GM18951 (cell line): ENCODE measurements at regions of chr11 and their contacts with region 1.

Region 1: GRCh38 chr11:7986768-7987559 is at the start of gene EIF3F:
- POLR2A ChIP-seq: peak; percentile 63

Region 2: GRCh38 chr11:7892840-7893254 is 94.1 kb before region 1 on chr11:
- in situ Hi-C with region 1: loop called (anchors 10 kb)
- POLR2A ChIP-seq: no peak

Region 3: DNA sequence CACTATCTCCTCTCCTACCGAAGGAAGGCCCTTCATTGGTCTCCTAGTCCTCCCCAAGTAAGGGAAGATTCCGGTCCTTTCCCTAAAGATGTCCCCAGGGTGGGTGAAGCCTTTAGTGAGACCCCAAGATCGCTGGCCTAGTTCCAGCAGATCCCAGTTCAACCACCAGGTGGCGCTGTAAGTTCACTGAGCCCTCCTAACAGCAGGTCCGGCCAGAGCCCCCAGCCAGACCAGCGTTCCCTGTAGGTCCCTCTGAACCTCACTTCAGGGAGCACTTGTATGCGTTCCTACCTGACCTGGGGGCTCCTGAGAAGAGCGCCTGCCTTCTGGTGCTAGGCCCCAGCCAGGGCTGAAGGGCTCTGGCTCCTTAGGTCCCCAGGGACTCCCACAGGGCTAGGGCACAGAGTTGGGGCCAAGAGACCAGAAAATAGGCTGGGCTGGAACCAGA is 238.6 kb after region 1 on chr11:
- in situ Hi-C with region 1: no loop called
- POLR2A ChIP-seq: no peak